ENCODE measurements at regions of chr5 and their contacts with region 1.

Region 1: DNA sequence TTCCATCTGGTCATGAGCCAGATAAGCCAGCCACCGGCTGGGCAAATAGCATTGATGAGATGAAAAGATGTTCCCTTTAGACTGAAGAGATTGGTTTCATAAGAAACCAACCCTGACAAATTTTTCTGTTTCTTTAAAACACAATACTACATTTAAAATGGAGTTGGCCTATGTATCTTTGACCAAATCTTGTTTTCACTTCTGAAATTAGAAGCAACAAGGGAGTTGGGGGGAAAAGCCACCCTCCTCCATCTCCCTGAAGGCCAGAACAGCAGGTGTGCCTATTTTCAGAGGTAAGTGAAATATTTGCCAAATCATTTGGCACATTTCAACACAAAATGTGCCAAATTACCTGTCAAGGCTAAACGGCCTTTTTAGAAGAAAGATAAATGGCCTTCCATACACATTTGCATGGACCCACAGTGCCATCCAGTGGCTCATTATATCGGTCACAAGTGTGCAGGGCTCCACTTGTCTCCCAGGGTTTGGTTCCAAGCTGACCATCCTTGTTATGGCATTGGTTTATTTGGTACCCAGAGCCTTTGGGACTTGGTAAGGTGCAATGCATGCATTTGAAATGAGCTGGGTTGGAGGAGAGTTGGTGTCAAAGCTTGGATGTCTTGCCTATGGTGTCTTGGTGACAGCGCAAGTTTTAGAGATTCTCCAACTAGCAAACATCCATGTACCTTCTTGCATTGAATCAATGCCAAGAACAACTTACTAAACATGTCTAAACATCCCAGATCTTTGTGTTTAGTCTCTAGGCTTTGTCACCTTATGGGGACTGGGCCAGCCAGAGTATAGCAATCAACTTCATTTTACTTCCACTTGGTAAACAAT is 372.0 kb upstream of the KIF2A start:
- DNase-seq: peak; percentile 46 to 55
- H3K4me3 ChIP-seq: no peak overlapping the region
- H3K4me3 Mint-ChIP-seq: no peak overlapping the region
- H3K27ac Mint-ChIP-seq: no peak overlapping the region
- H3K4me1 ChIP-seq: no peaks in the 10 kb centered on the region
- H3K4me1 Mint-ChIP-seq: no peaks in the 10 kb centered on the region
- H3K27me3 ChIP-seq: no peaks in the 10 kb centered on the region
- H3K27me3 Mint-ChIP-seq: peaks cover 5% of the 10 kb centered on the region
- CTCF ChIP-seq: peak; percentile 48 to 55

Region 2: DNA sequence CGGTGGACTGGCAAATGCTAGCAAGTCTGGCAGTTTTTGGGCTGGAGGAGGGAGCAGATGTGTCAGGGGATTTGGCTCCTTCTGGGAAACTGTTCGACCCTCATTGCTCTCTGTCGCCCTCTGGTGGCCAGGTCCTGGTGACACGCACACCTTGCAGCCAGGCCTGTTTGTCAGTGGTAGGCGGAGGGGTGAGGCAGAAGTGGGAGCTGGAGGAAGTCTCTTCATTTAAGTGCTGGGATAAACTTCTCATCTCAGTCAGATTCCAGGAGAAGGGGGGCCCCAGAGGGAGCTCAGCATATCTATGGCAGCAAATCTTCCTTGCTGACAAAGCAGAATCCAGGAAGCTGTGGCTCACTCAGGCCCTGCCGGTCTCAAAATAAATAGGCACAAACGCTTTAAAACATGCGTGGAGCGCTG is 275.4 kb before region 1 on chr5:
- CTCF ChIA-PET with region 1: no interaction called
- POLR2A ChIA-PET with region 1: no interaction called
- intact Hi-C with region 1: loop called (anchors 1 kb)
- DNase-seq: peak; percentile 78 to 87
- H3K4me3 ChIP-seq: no peak overlapping the region
- H3K4me3 Mint-ChIP-seq: no peak overlapping the region
- H3K27ac Mint-ChIP-seq: no peak overlapping the region
- H3K4me1 ChIP-seq: no peaks in the 10 kb centered on the region
- H3K4me1 Mint-ChIP-seq: no peaks in the 10 kb centered on the region
- H3K27me3 ChIP-seq: no peaks in the 10 kb centered on the region
- H3K27me3 Mint-ChIP-seq: peaks cover 16% of the 10 kb centered on the region
- CTCF ChIP-seq: peak; percentile 96

Region 3: DNA sequence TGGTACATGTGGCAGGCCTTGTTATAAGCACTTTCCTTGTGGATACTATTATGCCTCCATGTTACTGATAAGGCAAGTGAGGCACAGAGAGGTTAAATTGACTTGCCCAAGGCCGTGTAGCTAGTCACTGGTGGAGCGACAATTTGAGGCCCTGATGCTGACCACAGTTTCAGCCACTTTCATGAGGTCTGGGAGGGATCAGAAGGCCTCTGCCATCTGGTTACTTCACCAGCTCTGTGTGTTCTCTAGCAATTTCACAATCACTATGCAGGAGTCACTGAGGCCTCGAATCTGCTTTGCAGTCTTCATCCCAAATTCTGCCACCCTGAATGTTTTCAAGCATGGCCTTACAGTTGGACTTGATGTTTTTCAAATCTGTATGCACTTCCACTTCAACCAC is 653.7 kb after region 1 on chr5:
- CTCF ChIA-PET with region 1: no interaction called
- POLR2A ChIA-PET with region 1: no interaction called
- intact Hi-C with region 1: no loop called
- DNase-seq: no peak
- H3K4me3 ChIP-seq: no peak overlapping the region
- H3K4me3 Mint-ChIP-seq: no peak overlapping the region
- H3K27ac Mint-ChIP-seq: no peak overlapping the region
- H3K4me1 ChIP-seq: no peaks in the 10 kb centered on the region; the same call in 1 of the 2 replicates
- H3K4me1 Mint-ChIP-seq: peaks cover 12% of the 10 kb centered on the region
- H3K27me3 ChIP-seq: no peaks in the 10 kb centered on the region
- H3K27me3 Mint-ChIP-seq: no peaks in the 10 kb centered on the region
- CTCF ChIP-seq: no peak